ENCODE measurements at regions of chr17 and their contacts with region 1.

Region 1: DNA sequence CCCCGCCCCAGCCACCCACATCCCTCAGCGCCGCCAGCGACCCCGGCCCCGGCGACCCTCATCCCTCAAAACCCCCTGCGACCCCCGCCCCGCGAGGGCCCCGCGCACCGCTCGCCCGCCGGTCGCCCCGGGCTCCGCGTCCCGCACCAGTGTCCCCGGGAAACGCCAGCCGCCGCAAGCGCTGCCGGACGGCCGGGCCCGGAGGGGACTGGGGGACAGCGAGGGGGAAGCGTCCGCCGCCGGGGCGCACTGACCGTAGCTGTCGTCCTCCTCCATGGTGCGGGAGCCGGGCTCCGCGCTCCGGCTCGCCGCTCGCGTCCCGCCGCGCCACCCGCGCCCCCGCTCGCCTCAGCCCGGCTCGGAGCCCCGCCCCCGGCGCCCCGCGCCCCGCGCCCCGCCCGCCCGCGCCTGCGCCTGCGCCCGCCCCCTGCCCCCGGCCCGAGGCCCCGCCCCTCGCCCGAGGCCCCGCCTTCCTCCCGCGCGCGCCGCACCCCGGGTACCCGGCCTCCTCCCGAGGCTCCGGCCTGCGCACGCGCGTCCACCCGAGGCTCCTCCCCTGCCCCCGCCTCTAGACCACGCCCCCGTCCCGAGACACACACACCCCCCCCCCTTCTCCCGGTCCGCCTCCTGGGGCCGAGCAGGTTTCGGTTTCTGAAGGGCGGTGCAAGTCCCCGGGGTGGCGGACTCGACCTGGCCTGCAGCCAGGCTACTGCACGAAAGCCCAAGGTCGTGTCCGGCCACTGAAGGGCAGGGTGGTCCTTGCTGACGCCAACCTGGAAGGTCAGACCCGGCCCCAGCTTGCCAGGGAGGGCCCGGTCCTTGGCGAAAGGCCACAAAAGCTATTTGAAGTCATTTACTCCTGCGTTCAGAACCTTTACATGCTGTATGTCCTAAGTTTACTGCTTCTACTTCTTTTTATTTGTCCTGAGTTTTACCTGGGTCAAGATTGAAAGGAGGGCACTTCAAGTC is at the start of gene CYTH1:
- DNase-seq: peak; percentile 97 to 99 (median 97)
- ATAC-seq: peak; percentile 94 to 96 (median 95)
- H3K4me3 ChIP-seq: peak within 1 kb of the TSS; percentile 85 to 100 (median 94)
- H3K27ac ChIP-seq: peak within 1 kb of the TSS; percentile 88 to 99 (median 96)
- H3K4me1 ChIP-seq: peaks cover 0 to 58% (median 20%) of the 10 kb centered on the region in 12 donors
- H3K27me3 ChIP-seq: no peaks in the 10 kb centered on the region
- CTCF ChIP-seq: no peak
- POLR2A ChIP-seq: peak; percentile 30 to 54
- total RNA-seq, gene CYTH1: 27.2 to 59.1 (median 31.2) TPM

Region 2: GRCh38 chr17:78474614-78475146 is 307.6 kb before region 1 on chr17:
- intact Hi-C with region 1: no loop called
- DNase-seq: no peak
- ATAC-seq: peak in 1 of 4 donors; percentile 29
- H3K4me3 ChIP-seq: no peak overlapping the region
- H3K27ac ChIP-seq: no peak overlapping the region
- H3K4me1 ChIP-seq: no peaks in the 10 kb centered on the region
- H3K27me3 ChIP-seq: peaks cover 0 to 14% (median 4%) of the 10 kb centered on the region in 9 donors
- CTCF ChIP-seq: no peak
- POLR2A ChIP-seq: no peak

Region 3: GRCh38 chr17:78736526-78737079 is 45.6 kb before region 1 on chr17:
- intact Hi-C with region 1: loop called in 3 of 10 experiments (anchors 5 kb)
- DNase-seq: peak; percentile 81 to 88 (median 84)
- ATAC-seq: peak; percentile 83 to 89 (median 88)
- H3K4me3 ChIP-seq: peak overlapping the region; percentile 25 to 68 (median 56)
- H3K27ac ChIP-seq: peak overlapping the region; percentile 66 to 94 (median 86)
- H3K4me1 ChIP-seq: peaks cover 0 to 100% (median 74%) of the 10 kb centered on the region in 12 donors
- H3K27me3 ChIP-seq: no peaks in the 10 kb centered on the region
- CTCF ChIP-seq: peak in 4 of 12 donors; percentile 4 to 24 (median 22)
- POLR2A ChIP-seq: peak in 1 of 2 donors; percentile 42